H1 (cell line): ENCODE measurements at regions of chr3 and their contacts with region 1.

Region 1: DNA sequence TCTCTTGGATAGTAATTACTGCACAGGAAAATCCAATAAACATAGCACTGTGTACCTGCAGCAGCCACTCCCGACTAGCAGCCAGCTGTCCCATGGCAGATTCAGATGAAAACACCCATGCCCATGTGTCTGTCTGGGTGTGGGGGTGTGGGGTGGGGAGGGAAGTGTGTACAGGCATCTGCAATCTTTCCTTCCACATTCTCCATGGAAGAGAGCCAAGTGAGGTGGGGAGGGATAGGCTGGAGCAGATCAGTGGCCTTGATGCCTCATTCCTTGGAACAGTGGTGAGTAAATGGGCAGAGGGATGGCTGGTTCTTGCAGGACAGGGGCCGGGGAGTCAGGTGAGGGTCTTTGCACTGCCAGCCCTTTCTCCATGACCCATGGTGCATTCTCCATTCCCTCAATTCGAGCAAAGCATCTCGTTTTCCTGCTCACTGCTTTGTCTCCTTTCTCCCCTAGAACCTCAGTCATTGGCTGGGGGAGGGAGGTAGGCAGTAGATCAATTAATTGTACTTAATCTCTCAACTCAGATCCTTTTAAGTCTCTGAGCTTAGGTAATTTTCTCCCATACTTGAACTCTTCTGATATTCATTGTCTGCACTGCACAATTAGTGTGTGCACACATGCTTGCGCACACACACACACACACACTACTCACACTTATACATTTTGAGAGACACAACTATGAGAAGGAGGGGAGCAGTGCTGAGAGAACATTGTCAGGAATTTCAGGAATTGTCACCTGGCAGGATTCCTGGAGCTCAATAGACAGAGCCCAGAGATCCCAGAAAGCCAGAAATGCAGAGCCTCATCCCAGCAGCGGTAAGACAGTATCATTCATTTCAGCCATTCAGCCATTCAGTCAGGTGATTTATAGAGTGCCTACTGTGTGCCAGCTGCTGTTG is 31.9 kb downstream of the PDIA5 start:
- DNase-seq: no peak
- H3K4me3 ChIP-seq: no peak overlapping the region
- H3K27ac ChIP-seq: peak overlapping the region; percentile 48; the same call in 1 of the 2 replicates
- H3K4me1 ChIP-seq: peaks cover 4 to 20% (median 12%) of the 10 kb centered on the region in 4 experiments
- H3K27me3 ChIP-seq: no peaks in the 10 kb centered on the region
- CTCF ChIP-seq: no peak
- EP300 ChIP-seq: no peak
- POLR2A ChIP-seq: no peak
- RAD21 ChIP-seq: no peak

Region 2: DNA sequence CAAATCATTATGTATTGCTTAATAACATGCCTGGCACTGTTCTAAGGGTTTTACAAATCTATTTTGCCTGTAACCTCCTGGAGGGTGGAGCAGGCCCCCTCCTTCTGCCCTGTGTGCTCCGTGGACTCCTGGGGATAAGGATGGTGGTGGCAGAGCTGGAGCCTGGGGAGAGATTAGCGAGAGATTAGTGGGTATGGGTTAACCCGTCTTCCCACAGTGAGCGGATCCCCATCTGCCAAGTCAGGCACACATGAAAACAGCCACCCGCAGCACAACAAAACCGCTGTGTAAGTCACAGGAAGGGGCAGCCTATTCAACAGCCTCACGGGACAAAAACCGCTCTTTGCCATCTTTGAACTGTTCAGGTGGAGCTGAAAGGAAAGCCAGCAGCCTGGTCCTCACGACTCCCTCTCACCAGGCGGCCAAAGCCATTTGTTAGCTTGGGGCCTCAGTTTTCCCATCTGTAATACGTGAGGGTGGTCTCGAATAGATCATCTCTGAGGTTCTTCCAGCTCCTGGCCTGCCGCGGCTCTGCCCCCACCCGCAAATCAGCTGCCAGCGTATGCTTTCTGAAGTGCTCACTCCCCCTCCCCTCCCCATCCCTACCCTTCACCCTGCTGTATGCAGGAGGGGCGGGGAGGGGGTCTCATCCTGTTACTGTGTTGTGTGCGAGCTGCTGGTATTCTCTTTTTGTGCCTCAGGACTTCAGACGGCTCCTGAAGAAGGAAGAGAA is 11.7 kb after region 1 on chr3:
- CTCF ChIA-PET with region 1: interaction called, 10 read pairs
- POLR2A ChIA-PET with region 1: interaction called, 3 read pairs
- DNase-seq: no peak
- H3K4me3 ChIP-seq: no peak overlapping the region
- H3K27ac ChIP-seq: no peak overlapping the region
- H3K4me1 ChIP-seq: peaks cover 0 to 3% (median 0%) of the 10 kb centered on the region in 4 experiments; a peak in 3 of 7 replicates
- H3K27me3 ChIP-seq: no peaks in the 10 kb centered on the region
- CTCF ChIP-seq: no peak
- EP300 ChIP-seq: no peak
- POLR2A ChIP-seq: no peak
- RAD21 ChIP-seq: no peak

Region 3: GRCh38 chr3:123169492-123169929 is 70.8 kb after region 1 on chr3:
- CTCF ChIA-PET with region 1: no interaction called
- POLR2A ChIA-PET with region 1: no interaction called
- DNase-seq: peak in 1 of 2 experiments; percentile 42
- H3K4me3 ChIP-seq: no peak overlapping the region
- H3K27ac ChIP-seq: no peak overlapping the region
- H3K4me1 ChIP-seq: no peaks in the 10 kb centered on the region
- H3K27me3 ChIP-seq: no peaks in the 10 kb centered on the region
- CTCF ChIP-seq: no peak
- EP300 ChIP-seq: no peak
- POLR2A ChIP-seq: no peak
- RAD21 ChIP-seq: no peak